ENCODE measurements at regions of chr1 and their contacts with region 1.

Region 1: DNA sequence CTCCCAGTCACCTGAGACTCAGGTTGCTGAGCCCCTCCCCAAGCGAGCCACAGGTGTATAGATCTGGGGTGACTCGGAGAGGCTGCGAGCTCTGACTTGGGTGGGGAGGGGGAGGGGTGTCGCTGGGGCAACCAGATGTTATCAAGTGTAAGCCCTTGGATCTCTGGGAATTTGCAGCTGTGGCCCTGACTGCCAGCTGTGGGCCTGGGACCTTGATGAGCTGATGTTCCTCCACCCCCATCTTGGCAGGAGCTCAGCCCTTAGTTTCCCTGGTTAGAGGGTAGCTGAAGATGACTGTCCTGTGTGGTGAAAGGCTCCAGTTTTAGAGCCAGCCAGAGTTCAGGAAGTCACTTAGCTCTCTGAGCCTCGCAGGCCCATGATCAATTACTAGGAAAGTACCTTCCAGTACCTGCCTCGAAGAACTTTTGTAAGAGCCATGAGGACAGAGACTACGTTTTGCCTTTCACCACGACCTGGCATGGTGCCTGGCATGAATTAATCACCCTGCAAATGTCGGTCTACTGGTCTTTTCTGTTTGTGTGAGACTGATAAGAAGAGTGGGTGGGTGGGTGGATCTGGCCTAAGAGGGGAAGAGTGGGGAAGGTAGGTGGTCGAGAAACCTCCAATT is 55.8 kb downstream of the YARS1 start:
- DNase-seq: no peak
- H3K4me3 Mint-ChIP-seq: no peak overlapping the region
- H3K27ac Mint-ChIP-seq: no peak overlapping the region
- H3K4me1 Mint-ChIP-seq: peaks cover 34% of the 10 kb centered on the region
- H3K27me3 Mint-ChIP-seq: peaks cover 25% of the 10 kb centered on the region

Region 2: DNA sequence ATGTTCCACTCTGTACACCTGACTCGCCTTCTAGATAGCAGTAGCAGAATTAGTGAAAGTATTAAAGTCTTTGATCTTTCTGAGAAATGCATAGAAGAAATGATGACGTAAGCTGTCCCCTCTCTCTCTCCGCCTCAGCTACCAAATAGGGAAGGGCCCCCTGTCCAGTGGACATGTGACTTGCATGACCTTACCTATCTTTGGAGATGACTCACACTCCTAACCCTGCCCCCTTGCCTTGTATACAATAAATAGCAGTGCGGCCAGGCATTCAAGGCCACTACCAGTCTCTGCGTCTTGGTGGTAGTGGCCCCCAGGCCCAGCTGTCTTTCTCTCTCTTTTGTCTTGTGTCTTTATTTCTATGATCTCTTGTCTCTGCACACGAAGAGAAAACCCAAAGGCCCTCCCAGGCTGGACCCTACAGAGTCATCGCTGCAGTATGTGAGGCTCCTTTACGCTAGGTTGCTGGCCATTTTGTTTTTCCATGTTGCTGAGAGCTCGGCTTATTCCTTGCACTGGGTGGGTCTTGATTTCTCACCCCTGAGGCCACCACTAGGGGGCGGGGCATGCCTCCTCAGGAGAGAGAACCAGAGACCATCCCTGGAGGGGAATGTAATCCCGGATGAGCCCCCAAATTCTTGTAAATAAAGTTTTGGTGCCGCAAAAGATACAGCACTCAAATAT is 312.5 kb before region 1 on chr1:
- CTCF ChIA-PET with region 1: no interaction called
- DNase-seq: peak; percentile 28
- H3K4me3 Mint-ChIP-seq: no peak overlapping the region
- H3K27ac Mint-ChIP-seq: no peak overlapping the region
- H3K4me1 Mint-ChIP-seq: no peaks in the 10 kb centered on the region
- H3K27me3 Mint-ChIP-seq: peaks cover 55% of the 10 kb centered on the region

Region 3: GRCh38 chr1:32773018-32773763 is 11.8 kb after region 1 on chr1:
- CTCF ChIA-PET with region 1: interaction called, 11 read pairs
- DNase-seq: peak; percentile 85
- H3K4me3 Mint-ChIP-seq: no peak overlapping the region
- H3K27ac Mint-ChIP-seq: no peak overlapping the region
- H3K4me1 Mint-ChIP-seq: peaks cover 7% of the 10 kb centered on the region
- H3K27me3 Mint-ChIP-seq: no peaks in the 10 kb centered on the region

Measured in activated naive CD4-positive, alpha-beta T cell treated with anti-CD3 and anti-CD28 coated beads, Interleukin-2, amount 10 ng/mL, durations not matched to agents 7 days and 5 days (primary cell).